Endothelial cell of umbilical vein (primary cell): ENCODE measurements at regions of chr3 and their contacts with region 1.

Region 1: GRCh38 chr3:168511428-168512014 is 415.8 kb upstream of the GOLIM4 start:
- DNase-seq: peak; percentile 14
- H3K4me3 ChIP-seq: no peak overlapping the region
- H3K27ac ChIP-seq: no peak overlapping the region
- H3K4me1 ChIP-seq: no peaks in the 10 kb centered on the region
- H3K27me3 ChIP-seq: peaks cover 0 to 3% of the 10 kb centered on the region in 2 experiments
- CTCF ChIP-seq: peak; percentile 32 to 59
- POLR2A ChIP-seq: no peak

Region 2: DNA sequence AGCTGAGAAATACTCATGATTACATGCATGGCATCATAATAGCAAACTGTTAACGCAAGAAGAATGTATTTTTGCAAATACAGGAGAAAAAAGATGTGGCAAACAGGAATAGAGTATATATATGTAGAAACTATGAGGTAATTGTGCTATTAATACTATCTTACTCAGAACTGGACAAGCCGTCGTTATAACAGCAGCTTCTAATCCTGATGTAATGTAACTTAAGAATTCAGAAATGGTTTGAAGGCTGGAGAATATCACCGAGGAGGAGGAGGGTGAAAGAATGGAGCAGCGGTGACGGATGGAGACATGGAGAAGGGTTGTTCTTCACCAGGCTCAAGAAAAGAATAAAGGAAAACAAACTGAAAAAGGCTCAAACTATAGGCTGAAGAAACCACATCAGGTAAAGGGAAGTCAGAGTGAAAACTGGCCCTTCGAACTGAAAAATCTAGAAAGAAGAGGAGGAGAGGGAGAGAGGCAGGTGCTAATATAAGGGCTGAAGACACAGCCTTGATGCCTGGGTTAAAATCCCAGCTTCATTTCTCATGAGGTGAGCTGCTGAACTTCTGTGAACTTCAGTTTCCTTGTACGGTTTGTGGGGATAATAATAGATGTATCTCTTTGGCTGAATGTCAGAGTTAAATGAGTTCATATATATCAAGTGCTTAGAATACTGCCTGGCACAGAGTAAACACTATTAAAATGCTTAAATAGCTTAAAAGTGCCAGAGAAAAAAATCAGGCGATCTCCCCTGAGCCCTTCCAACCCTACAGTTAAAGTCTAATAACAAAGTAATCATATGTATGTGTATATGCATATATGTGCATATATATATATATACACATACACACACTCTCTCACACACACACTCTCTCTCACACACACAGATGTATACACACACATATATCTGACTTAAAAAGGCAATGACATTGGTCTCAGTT is 459.7 kb before region 1 on chr3:
- CTCF ChIA-PET with region 1: no interaction called
- POLR2A ChIA-PET with region 1: no interaction called
- dilution Hi-C with region 1: no loop called
- intact Hi-C with region 1: no loop called
- DNase-seq: no peak
- H3K4me3 ChIP-seq: no peak overlapping the region
- H3K27ac ChIP-seq: no peak overlapping the region
- H3K4me1 ChIP-seq: no peaks in the 10 kb centered on the region
- H3K27me3 ChIP-seq: no peaks in the 10 kb centered on the region
- CTCF ChIP-seq: no peak
- POLR2A ChIP-seq: no peak

Region 3: DNA sequence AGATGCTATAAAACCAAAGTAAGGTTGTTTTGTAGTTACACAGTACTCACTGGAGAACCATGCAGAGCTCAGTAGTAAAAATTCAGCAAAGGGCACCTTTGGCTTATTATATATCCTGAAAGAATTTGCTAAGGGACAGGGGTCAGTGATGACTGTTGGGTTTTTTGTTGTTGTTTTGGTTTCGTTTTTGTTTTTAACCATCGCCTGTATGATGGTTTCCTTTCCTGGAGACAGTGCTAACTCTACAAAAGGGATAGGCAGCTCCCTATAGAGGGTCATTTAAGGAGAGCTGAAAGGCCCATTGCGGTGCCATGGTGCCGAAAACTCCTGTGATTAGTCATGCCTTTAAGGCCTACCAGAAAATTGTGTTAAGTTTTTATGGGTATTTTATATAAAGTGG is 297.6 kb before region 1 on chr3:
- CTCF ChIA-PET with region 1: interaction called, 10 read pairs
- POLR2A ChIA-PET with region 1: no interaction called
- dilution Hi-C with region 1: no loop called
- intact Hi-C with region 1: loop called (anchors 1 kb)
- DNase-seq: no peak
- H3K4me3 ChIP-seq: no peak overlapping the region
- H3K27ac ChIP-seq: no peak overlapping the region
- H3K4me1 ChIP-seq: no peaks in the 10 kb centered on the region
- H3K27me3 ChIP-seq: peaks cover 2 to 5% of the 10 kb centered on the region in 2 experiments
- CTCF ChIP-seq: no peak
- POLR2A ChIP-seq: no peak

Region 4: DNA sequence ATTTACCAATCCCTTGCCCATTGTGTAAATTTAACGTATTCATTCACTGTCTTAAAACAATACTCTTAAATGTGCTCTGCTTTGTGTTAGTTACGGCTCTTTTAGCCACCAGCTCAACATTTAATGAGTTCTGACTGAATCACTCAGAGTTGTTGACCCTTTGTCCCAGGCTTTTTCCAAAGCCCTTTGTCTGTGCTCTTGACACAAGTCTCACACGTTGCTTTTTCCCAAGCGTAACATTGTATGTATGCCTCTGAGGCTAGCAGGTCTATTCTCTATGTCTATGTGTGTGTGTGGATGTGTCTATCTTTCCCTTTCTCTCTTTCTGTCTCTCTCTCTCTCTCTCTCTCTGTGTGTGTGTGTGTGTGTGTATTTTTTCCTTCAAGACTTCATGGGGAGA is 19.6 kb after region 1 on chr3:
- CTCF ChIA-PET with region 1: interaction called, 10 read pairs
- POLR2A ChIA-PET with region 1: no interaction called
- dilution Hi-C with region 1: no loop called
- intact Hi-C with region 1: no loop called
- DNase-seq: no peak
- H3K4me3 ChIP-seq: no peak overlapping the region
- H3K27ac ChIP-seq: no peak overlapping the region
- H3K4me1 ChIP-seq: no peaks in the 10 kb centered on the region
- H3K27me3 ChIP-seq: peaks cover 0 to 2% of the 10 kb centered on the region in 2 experiments
- CTCF ChIP-seq: no peak
- POLR2A ChIP-seq: no peak

Region 5: DNA sequence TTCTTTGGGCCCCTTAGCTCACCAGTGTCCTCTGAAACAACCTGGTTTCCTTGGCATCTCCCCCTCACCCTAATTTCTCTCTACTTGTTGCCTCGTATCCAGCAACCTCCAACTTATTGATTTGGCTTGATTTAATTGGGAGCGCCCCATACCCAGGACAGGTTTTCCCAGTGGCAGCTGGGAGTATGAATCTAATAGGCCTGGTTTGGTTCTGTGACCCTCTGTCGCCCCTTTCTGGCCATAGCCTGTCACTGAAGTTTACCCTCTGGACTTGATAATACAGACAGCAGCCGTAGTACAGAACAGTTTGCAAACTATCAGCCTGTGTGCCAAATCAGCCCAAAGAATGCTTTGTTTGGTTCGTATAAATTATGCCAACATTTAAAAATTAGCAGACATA is 109.3 kb after region 1 on chr3:
- CTCF ChIA-PET with region 1: interaction called, 3 read pairs
- POLR2A ChIA-PET with region 1: no interaction called
- dilution Hi-C with region 1: no loop called
- intact Hi-C with region 1: loop called (anchors 2 kb)
- DNase-seq: peak; percentile 13
- H3K4me3 ChIP-seq: no peak overlapping the region
- H3K27ac ChIP-seq: no peak overlapping the region
- H3K4me1 ChIP-seq: no peaks in the 10 kb centered on the region
- H3K27me3 ChIP-seq: peaks cover 2 to 16% of the 10 kb centered on the region in 2 experiments
- CTCF ChIP-seq: peak; percentile 36 to 43
- POLR2A ChIP-seq: no peak

Region 6: GRCh38 chr3:169744366-169745054 is 1233.0 kb after region 1 on chr3:
- CTCF ChIA-PET with region 1: interaction called, 15 read pairs
- POLR2A ChIA-PET with region 1: no interaction called
- dilution Hi-C with region 1: no loop called
- intact Hi-C with region 1: no loop called
- DNase-seq: peak; percentile 74
- H3K4me3 ChIP-seq: no peak overlapping the region
- H3K27ac ChIP-seq: no peak overlapping the region
- H3K4me1 ChIP-seq: no peaks in the 10 kb centered on the region
- H3K27me3 ChIP-seq: peaks cover 2 to 13% of the 10 kb centered on the region in 2 experiments
- CTCF ChIP-seq: peak in 1 of 2 donors; percentile 21
- POLR2A ChIP-seq: no peak